ENCODE measurements at regions of chrX and their contacts with region 1.

Region 1: GRCh38 chrX:133171962-133172708 is 46.0 kb downstream of the TFDP3 start:
- DNase-seq: peak in 1 of 9 experiments; percentile 0
- ATAC-seq: no peak
- H3K4me3 ChIP-seq: no peak overlapping the region
- H3K4me3 Mint-ChIP-seq: no peak overlapping the region
- H3K27ac ChIP-seq: no peak overlapping the region
- H3K27ac Mint-ChIP-seq: no peak overlapping the region
- H3K4me1 ChIP-seq: no peaks in the 10 kb centered on the region
- H3K4me1 Mint-ChIP-seq: no peaks in the 10 kb centered on the region
- H3K27me3 ChIP-seq: no peaks in the 10 kb centered on the region
- H3K27me3 Mint-ChIP-seq: no peaks in the 10 kb centered on the region
- CTCF ChIP-seq: no peak

Region 2: DNA sequence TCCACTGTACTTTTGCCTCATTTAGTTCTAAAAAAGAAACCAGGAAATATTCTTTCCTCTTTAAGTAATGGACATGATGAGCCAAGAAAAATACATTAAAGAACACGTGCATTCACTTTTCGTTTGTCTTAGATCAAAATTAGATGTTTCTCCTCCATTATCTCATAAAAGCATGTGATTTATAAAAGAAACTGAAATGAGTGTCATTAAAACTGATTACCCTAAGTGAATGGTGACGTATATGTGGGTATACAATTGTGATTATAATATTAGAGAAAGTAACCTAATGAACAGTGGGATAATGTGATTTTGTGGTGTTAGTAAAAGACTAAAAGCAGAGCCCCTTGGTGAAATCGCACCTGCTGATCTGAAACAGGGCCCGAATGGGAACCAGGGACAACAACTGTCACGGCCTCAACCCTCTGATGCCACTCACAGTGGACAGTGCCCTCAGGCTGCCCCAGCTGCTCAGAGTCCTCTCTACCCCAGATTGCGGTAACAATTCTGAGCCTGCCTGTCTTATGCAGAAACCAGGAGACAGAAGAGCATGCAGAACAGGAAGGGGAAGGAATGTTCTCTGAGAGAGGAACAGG is 188.0 kb before region 1 on chrX:
- CTCF ChIA-PET with region 1: no interaction called
- POLR2A ChIA-PET with region 1: no interaction called
- intact Hi-C with region 1: loop called in 1 of 2 experiments (anchors 5 kb)
- DNase-seq: no peak
- ATAC-seq: no peak
- H3K4me3 ChIP-seq: no peak overlapping the region
- H3K4me3 Mint-ChIP-seq: no peak overlapping the region
- H3K27ac ChIP-seq: no peak overlapping the region
- H3K27ac Mint-ChIP-seq: no peak overlapping the region
- H3K4me1 ChIP-seq: no peaks in the 10 kb centered on the region
- H3K4me1 Mint-ChIP-seq: no peaks in the 10 kb centered on the region
- H3K27me3 ChIP-seq: no peaks in the 10 kb centered on the region
- H3K27me3 Mint-ChIP-seq: peaks cover 8% of the 10 kb centered on the region
- CTCF ChIP-seq: no peak

Measured in CD8-positive, alpha-beta T cell (primary cell).